ENCODE measurements at regions of chrX and their contacts with region 1.

Region 1: DNA sequence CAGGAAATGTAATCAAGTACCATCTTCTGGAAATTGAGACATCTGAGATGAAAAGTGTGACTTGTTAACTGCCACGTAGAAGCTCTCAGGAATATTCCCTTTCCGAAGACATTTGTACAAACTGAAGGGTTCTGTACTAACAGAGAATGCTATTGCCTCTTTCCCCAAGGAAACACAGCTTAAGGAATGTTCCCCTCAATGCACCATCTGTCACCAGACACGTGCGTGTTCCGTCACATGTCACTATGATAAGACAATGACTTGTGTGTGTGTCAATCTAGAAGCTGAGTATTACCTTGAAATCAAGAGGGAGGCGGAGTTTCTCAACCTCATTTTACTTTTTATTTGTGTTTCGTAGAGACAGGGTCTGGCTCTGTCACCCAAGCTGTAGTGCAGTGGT is 58.1 kb downstream of the DHRSX start:
- DNase-seq: no peak
- H3K4me3 Mint-ChIP-seq: no peak overlapping the region
- H3K27ac Mint-ChIP-seq: no peak overlapping the region
- H3K4me1 Mint-ChIP-seq: no peaks in the 10 kb centered on the region
- H3K27me3 Mint-ChIP-seq: no peaks in the 10 kb centered on the region

Region 2: DNA sequence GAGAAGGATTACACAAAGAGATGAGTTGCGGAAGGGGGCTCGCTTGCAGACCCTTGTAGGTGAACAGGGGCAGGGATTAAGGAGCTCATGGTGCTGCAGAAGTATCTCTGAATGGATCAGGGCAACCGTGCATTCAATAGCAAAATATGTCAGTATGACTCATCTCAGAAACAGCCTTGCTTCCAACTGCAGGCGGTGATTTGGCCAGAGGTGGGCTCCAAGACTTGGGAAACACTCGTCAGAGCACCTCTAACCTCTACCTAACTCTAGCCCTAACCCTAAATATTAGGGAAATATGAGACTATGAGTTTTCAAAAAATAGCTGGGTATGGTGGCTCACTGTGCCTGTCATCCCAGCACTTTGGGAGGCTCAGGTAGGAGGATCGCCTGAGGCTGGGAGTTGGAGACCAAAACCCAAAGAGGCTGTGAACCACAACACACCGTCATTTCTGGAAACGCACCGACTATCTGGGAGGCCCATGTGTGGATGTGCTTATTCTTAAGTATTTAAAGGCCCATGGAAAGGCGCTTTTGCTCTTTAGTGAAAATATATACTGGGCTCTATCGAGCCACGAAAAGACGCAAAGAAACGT is 44.5 kb before region 1 on chrX:
- intact Hi-C with region 1: loop called (anchors 2 kb)
- DNase-seq: no peak
- H3K4me3 Mint-ChIP-seq: no peak overlapping the region
- H3K27ac Mint-ChIP-seq: no peak overlapping the region
- H3K4me1 Mint-ChIP-seq: no peaks in the 10 kb centered on the region
- H3K27me3 Mint-ChIP-seq: no peaks in the 10 kb centered on the region

Region 3: DNA sequence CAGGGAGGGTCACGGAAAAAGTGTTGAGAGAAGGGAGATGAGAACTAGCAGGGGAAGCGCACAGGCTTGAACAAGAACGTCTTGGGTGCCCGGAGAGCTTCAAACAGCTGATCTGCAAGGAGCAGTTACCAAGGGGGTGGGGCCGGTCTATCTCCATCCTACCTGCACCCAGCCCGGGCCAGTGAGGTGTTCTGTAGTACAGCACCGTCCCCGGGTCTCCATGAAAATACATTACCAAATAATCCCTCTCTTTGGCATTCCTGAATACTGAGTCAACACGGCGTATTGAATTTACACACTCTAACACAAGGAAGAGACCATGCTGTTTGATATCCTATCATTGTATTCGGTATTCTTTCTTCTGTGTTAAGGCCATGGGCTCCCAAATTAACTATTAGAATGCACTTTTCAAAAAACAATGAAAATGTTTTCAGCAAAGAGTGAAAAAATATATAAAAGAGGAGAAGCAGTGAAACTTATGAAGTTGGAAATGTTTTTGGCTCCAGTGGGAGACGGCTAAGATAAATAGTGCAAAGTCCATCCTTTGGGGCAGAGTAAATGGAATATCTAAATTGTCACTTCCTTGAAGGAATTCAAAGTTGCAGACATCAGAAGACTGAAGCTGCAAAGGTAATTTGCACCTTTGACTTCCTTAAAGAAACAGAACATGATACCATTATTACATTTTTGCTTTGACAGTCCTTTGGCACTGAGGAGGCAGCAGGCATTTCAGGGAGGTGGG is 32.2 kb before region 1 on chrX:
- intact Hi-C with region 1: no loop called
- DNase-seq: no peak
- H3K4me3 Mint-ChIP-seq: no peak overlapping the region
- H3K27ac Mint-ChIP-seq: no peak overlapping the region
- H3K4me1 Mint-ChIP-seq: no peaks in the 10 kb centered on the region
- H3K27me3 Mint-ChIP-seq: no peaks in the 10 kb centered on the region